CD14-positive monocyte (primary cell): ENCODE measurements at regions of chr7 and their contacts with region 1.

Region 1: GRCh38 chr7:29189743-29190201 is 4.8 kb upstream of the CHN2 start:
- DNase-seq: peak in 2 of 3 donors; percentile 40 to 50
- H3K4me3 ChIP-seq: no peak overlapping the region
- H3K4me3 Mint-ChIP-seq: no peak overlapping the region
- H3K27ac ChIP-seq: no peak overlapping the region
- H3K27ac Mint-ChIP-seq: peak overlapping the region in 1 of 7 donors; percentile 13
- H3K4me1 ChIP-seq: peaks cover 0 to 9% of the 10 kb centered on the region in 2 donors
- H3K4me1 Mint-ChIP-seq: peaks cover 15% of the 10 kb centered on the region
- H3K27me3 ChIP-seq: peaks cover 0 to 14% of the 10 kb centered on the region in 2 donors
- H3K27me3 Mint-ChIP-seq: peaks cover 11 to 24% (median 13%) of the 10 kb centered on the region in 3 donors
- CTCF ChIP-seq: peak; percentile 93

Region 2: GRCh38 chr7:29146057-29146706 is 43.6 kb before region 1 on chr7 and contains the start of gene CPVL:
- intact Hi-C with region 1: loop called in 1 of 2 experiments (anchors 10 kb)
- DNase-seq: peak; percentile 65 to 78 (median 67)
- H3K4me3 ChIP-seq: peak within 1 kb of the TSS; percentile 69 to 98 (median 95)
- H3K4me3 Mint-ChIP-seq: peak within 1 kb of the TSS; percentile 96 to 100
- H3K27ac ChIP-seq: peak within 1 kb of the TSS; percentile 74 to 90
- H3K27ac Mint-ChIP-seq: peak within 1 kb of the TSS; percentile 93 to 95 (median 95)
- H3K4me1 ChIP-seq: peaks cover 88 to 94% of the 10 kb centered on the region in 2 donors
- H3K4me1 Mint-ChIP-seq: peaks cover 91% of the 10 kb centered on the region
- H3K27me3 ChIP-seq: no peaks in the 10 kb centered on the region
- H3K27me3 Mint-ChIP-seq: peaks cover 0 to 2% (median 0%) of the 10 kb centered on the region in 3 donors
- CTCF ChIP-seq: no peak
- polyA plus RNA-seq, gene CPVL: 410 to 1,111 (median 1,108) TPM

Region 3: GRCh38 chr7:29285444-29285793 is 95.6 kb after region 1 on chr7:
- intact Hi-C with region 1: loop called in 1 of 2 experiments (anchors 10 kb)
- DNase-seq: peak; percentile 56 to 85 (median 56)
- H3K4me3 ChIP-seq: no peak overlapping the region
- H3K4me3 Mint-ChIP-seq: no peak overlapping the region
- H3K27ac ChIP-seq: peak overlapping the region in 1 of 2 donors; percentile 11
- H3K27ac Mint-ChIP-seq: peak overlapping the region in 4 of 7 donors; percentile 10 to 74 (median 40)
- H3K4me1 ChIP-seq: peaks cover 42 to 48% of the 10 kb centered on the region in 2 donors
- H3K4me1 Mint-ChIP-seq: peaks cover 52% of the 10 kb centered on the region
- H3K27me3 ChIP-seq: no peaks in the 10 kb centered on the region
- H3K27me3 Mint-ChIP-seq: peaks cover 0 to 4% (median 2%) of the 10 kb centered on the region in 3 donors
- CTCF ChIP-seq: no peak

Region 4: GRCh38 chr7:29337546-29338116 is 147.9 kb after region 1 on chr7:
- intact Hi-C with region 1: loop called in 1 of 2 experiments (anchors 10 kb)
- DNase-seq: no peak
- H3K4me3 ChIP-seq: no peak overlapping the region
- H3K4me3 Mint-ChIP-seq: peak overlapping the region in 1 of 2 donors; percentile 32
- H3K27ac ChIP-seq: no peak overlapping the region
- H3K27ac Mint-ChIP-seq: peak overlapping the region in 1 of 7 donors; percentile 46
- H3K4me1 ChIP-seq: peaks cover 10 to 14% of the 10 kb centered on the region in 2 donors
- H3K4me1 Mint-ChIP-seq: peaks cover 25% of the 10 kb centered on the region
- H3K27me3 ChIP-seq: no peaks in the 10 kb centered on the region
- H3K27me3 Mint-ChIP-seq: peaks cover 0 to 2% (median 0%) of the 10 kb centered on the region in 3 donors
- CTCF ChIP-seq: no peak

Region 5: DNA sequence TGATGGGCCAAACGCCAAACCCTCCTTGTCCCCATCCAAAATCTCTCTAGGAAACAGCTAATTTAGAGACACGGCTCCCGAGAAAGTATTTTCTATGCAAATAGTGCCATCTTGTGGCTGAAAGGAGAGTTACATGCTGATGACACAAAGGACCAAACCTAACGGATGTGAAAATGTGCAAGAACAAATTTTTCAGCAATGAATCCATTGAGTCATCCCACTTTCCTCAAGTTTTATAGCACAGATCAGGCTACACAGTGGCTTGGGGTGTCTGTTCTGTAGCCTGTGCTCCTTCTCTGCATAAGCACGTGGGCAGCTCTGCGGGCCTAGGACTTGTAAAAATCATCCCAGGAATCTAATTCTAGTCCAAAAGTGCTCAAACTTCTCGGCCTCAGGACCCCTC is 219.1 kb after region 1 on chr7:
- intact Hi-C with region 1: loop called in 1 of 2 experiments (anchors 5 kb)
- DNase-seq: peak; percentile 39 to 58 (median 53)
- H3K4me3 ChIP-seq: no peak overlapping the region
- H3K4me3 Mint-ChIP-seq: no peak overlapping the region
- H3K27ac ChIP-seq: no peak overlapping the region
- H3K27ac Mint-ChIP-seq: no peak overlapping the region
- H3K4me1 ChIP-seq: no peaks in the 10 kb centered on the region
- H3K4me1 Mint-ChIP-seq: no peaks in the 10 kb centered on the region
- H3K27me3 ChIP-seq: no peaks in the 10 kb centered on the region
- H3K27me3 Mint-ChIP-seq: peaks cover 0 to 2% (median 0%) of the 10 kb centered on the region in 3 donors
- CTCF ChIP-seq: peak; percentile 90

Region 6: GRCh38 chr7:29442146-29442545 is 252.4 kb after region 1 on chr7:
- intact Hi-C with region 1: no loop called
- DNase-seq: no peak
- H3K4me3 ChIP-seq: no peak overlapping the region
- H3K4me3 Mint-ChIP-seq: no peak overlapping the region
- H3K27ac ChIP-seq: no peak overlapping the region
- H3K27ac Mint-ChIP-seq: no peak overlapping the region
- H3K4me1 ChIP-seq: no peaks in the 10 kb centered on the region
- H3K4me1 Mint-ChIP-seq: no peaks in the 10 kb centered on the region
- H3K27me3 ChIP-seq: no peaks in the 10 kb centered on the region
- H3K27me3 Mint-ChIP-seq: peaks cover 0 to 1% (median 0%) of the 10 kb centered on the region in 3 donors
- CTCF ChIP-seq: no peak

Region 7: DNA sequence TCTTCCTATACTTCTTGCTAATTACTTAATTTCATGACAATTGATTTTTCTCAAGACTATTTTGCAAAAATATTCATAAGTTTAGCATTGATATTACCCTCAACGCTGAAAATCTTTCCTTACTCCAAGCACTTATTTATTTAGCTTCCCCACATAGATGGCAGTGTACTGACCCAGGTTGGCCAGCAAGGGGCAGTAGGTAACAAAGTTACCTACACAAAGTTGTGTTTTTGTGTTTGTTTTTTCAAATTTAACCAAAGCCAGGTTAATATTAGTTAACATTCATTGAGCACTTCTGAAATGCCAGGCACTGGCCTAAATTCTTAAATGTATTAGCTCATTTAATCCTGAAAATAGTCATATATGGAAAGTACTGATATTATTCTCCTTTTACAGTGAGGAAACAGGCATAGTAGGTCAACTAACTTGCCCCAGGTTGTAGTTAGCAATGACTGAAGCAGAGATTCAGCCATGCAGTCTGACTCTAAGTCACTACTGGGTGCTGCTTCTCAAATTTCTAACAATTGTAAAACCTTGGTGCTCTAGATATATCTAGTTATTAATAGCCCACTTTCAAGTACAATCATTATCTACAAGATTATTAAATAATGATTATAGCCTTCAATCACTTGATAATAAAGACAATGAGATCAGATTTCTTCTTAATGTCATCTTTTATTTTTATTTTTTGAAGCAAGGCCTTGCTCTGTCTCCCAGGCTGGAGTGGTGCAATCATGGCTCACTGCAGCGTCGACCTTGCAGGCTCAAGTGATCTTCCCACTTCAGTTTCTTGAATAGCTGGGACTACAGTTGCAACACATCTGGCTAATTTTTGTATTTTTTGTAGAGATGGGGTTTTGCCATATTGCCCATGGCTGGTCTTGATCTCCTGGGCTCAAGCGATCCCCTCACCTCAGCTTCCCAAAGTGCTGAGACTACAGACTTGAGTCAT is 1320.6 kb after region 1 on chr7:
- intact Hi-C with region 1: loop called in 1 of 2 experiments (anchors 10 kb)
- DNase-seq: peak; percentile 29 to 47 (median 45)
- H3K4me3 ChIP-seq: no peak overlapping the region
- H3K4me3 Mint-ChIP-seq: no peak overlapping the region
- H3K27ac ChIP-seq: no peak overlapping the region
- H3K27ac Mint-ChIP-seq: no peak overlapping the region
- H3K4me1 ChIP-seq: peaks cover 2% of the 10 kb centered on the region in 2 donors
- H3K4me1 Mint-ChIP-seq: peaks cover 9% of the 10 kb centered on the region
- H3K27me3 ChIP-seq: no peaks in the 10 kb centered on the region
- H3K27me3 Mint-ChIP-seq: peaks cover 0 to 1% (median 0%) of the 10 kb centered on the region in 3 donors
- CTCF ChIP-seq: peak; percentile 93